Dendritic cell treated with granulocyte-macrophage colony-stimulating factor and Interleukin-4, amounts not matched to agents 40 ng/mL and 50 ng/mL, for 4 days (primary cell): ENCODE measurements at regions of chr1 and their contacts with region 1.

Region 1: DNA sequence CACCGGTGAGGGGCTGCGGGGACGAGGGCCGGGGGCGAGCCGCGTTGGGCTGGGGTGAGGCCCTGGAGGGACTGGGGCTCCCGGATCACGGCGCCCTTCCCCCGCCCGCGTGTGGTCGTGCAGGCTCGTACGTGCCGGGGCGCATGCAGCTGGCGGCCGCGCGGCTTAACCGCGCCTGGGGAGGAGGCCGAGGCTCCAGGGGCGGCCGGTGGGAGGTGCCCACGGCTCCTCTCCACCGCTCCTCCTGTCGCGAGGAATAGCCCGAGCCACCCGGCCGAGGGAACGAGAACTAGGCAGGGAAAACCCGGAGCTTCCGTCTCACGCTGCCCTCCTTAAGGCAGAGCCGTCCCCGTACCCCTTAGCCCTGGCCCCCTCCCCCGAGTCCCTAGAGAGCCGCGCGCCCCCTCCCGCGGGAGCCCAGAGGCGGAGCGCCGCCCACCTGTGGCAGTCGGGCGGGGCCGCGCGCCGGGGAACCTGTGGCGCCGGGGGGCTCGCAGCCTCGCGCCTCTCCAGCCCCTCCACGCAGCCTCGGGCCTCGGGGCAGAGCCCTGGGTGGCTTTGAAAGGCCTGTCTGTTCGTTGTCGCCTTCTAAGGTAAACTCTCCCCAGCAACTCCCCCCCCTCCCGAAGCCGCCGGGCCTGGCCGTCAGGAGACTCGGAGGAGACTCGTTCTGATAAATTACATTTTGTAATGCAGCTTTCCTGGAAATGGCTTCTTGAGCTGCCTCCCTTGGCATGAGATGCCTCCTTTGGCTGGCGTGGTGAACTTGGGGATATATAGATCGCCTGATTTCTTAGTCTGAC is 746 bp downstream of the AK4 start:
- H3K4me3 Mint-ChIP-seq: peak overlapping the region; percentile 87
- H3K27ac Mint-ChIP-seq: peak overlapping the region; percentile 73
- H3K4me1 Mint-ChIP-seq: peaks cover 24% of the 10 kb centered on the region
- H3K27me3 Mint-ChIP-seq: peaks cover 20% of the 10 kb centered on the region

Region 2: GRCh38 chr1:64811131-64811530 is 337.6 kb before region 1 on chr1:
- intact Hi-C with region 1: no loop called
- H3K4me3 Mint-ChIP-seq: no peak overlapping the region
- H3K27ac Mint-ChIP-seq: no peak overlapping the region
- H3K4me1 Mint-ChIP-seq: no peaks in the 10 kb centered on the region
- H3K27me3 Mint-ChIP-seq: no peaks in the 10 kb centered on the region

Region 3: DNA sequence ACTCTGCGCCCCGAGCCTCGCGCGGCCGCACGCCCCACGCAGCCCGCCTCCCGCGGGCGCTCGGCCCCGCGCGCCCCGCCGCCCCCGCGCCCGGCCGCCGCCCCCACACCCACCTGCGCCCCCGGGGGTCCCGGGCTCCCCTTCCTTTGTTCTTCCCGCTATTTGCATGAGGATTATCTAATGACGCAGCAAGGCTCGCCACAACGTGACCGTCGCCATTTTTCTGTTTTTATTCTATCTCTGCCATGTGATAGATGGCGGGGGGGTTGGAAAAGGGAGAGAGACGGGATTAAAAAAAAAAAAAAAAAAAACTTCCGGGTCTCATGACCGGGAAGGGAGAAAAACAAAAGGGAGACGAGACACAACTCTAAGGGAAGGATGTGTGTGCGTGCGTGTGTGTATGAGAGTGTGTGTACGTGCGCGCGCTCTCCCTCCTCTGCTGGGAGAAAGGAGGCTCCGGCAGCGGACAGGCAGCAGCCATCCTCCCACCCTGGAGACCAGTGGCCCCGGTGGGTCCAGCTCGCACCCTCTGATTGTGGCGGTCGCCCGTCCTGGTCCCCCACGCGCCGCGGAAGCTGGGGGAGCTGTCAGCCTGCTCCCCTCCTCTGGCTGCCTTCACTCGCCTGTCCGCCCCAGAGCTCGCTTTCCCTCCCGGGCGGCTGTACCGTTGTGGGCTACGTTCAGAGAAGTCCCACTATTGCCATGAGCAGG is 81.1 kb before region 1 on chr1:
- intact Hi-C with region 1: loop called (anchors 2 kb)
- H3K4me3 Mint-ChIP-seq: peak overlapping the region; percentile 94
- H3K27ac Mint-ChIP-seq: peak overlapping the region; percentile 98
- H3K4me1 Mint-ChIP-seq: peaks cover 46% of the 10 kb centered on the region
- H3K27me3 Mint-ChIP-seq: no peaks in the 10 kb centered on the region

Region 4: GRCh38 chr1:65165269-65165993 is 16.7 kb after region 1 on chr1:
- intact Hi-C with region 1: loop called (anchors 2 kb)
- H3K4me3 Mint-ChIP-seq: peak overlapping the region; percentile 50
- H3K27ac Mint-ChIP-seq: peak overlapping the region; percentile 82
- H3K4me1 Mint-ChIP-seq: peaks cover 96% of the 10 kb centered on the region
- H3K27me3 Mint-ChIP-seq: no peaks in the 10 kb centered on the region

Region 5: GRCh38 chr1:65209005-65209885 is 60.5 kb after region 1 on chr1:
- intact Hi-C with region 1: loop called (anchors 2 kb)
- H3K4me3 Mint-ChIP-seq: no peak overlapping the region
- H3K27ac Mint-ChIP-seq: no peak overlapping the region
- H3K4me1 Mint-ChIP-seq: peaks cover 41% of the 10 kb centered on the region
- H3K27me3 Mint-ChIP-seq: no peaks in the 10 kb centered on the region